Mammary epithelial cell (primary cell): ENCODE measurements at regions of chr10 and their contacts with region 1.

Region 1: GRCh38 chr10:47034441-47035051 is 123.3 kb downstream of the PTPN20 start:
- DNase-seq: no peak
- H3K4me3 ChIP-seq: no peak overlapping the region
- H3K27ac ChIP-seq: no peak overlapping the region
- H3K4me1 ChIP-seq: no peaks in the 10 kb centered on the region
- H3K27me3 ChIP-seq: no peaks in the 10 kb centered on the region
- CTCF ChIP-seq: no peak

Region 2: DNA sequence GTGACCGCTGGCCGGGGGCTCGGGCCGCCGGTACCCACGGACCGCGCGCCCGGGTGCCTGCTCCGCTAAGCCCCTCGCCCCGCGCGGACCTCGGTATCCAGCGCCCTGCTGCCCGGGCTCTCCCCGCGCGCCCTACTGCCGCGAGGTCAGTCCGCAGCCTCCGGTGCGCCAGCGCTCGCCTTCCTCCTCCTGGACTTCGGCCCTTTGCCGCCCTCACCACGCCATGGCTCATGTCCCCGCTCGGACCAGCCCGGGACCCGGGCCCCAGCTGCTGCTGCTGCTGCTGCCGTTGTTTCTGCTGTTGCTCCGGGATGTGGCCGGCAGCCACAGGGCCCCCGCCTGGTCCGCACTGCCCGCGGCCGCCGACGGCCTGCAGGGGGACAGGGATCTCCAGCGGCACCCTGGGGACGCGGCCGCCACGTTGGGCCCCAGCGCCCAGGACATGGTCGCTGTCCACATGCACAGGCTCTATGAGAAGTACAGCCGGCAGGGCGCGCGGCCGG is 265.9 kb after region 1 on chr10:
- CTCF ChIA-PET with region 1: no interaction called
- dilution Hi-C with region 1: loop called (anchors 5 kb)
- in situ Hi-C with region 1: no loop called
- intact Hi-C with region 1: no loop called
- DNase-seq: no peak
- H3K4me3 ChIP-seq: no peak overlapping the region
- H3K27ac ChIP-seq: no peak overlapping the region
- H3K4me1 ChIP-seq: no peaks in the 10 kb centered on the region
- H3K27me3 ChIP-seq: peaks cover 20% of the 10 kb centered on the region
- CTCF ChIP-seq: no peak